Dendritic cell treated with granulocyte-macrophage colony-stimulating factor and Interleukin-4, amounts not matched to agents 40 ng/mL and 50 ng/mL, for 4 days (primary cell): ENCODE measurements at regions of chr18 and their contacts with region 1.

Region 1: DNA sequence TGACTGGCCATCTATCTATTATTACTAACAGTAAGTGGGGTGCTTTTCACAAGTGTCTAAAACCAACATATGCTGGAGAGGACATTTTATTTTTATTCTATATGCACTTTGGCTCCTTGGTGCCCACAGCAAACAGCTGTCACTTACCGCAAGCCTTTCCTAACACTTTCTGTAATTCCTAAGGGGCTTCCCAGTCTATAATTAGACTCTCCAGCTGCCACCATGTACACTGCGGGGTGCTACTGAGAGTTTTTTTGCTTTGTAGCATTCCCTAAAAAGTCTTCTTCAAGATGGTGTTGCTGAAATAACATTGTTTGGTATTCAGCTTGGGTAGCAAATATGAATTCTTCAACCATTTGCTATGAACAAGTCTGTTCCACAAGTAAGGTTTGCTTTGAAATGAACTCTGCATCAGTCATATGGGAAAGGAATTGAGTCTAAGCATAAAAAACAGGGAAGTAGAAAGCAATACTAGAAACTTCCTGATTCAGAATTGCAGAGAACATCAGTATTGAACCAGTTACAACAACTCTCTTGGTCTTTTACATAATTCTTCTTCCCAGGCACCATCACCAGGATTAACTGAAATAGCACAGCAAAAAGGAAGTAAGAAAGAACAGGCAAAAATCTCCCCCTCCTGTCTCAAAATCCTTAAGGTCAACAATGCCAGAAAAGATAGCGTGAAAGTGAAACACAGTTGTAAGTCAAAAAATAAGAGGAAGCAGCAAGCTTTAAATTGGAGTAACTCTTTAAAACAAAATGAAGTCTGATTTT is 28.6 kb downstream of the EPB41L3 start:
- H3K4me3 Mint-ChIP-seq: peak overlapping the region; percentile 48
- H3K27ac Mint-ChIP-seq: peak overlapping the region; percentile 82
- H3K4me1 Mint-ChIP-seq: peaks cover 63% of the 10 kb centered on the region
- H3K27me3 Mint-ChIP-seq: no peaks in the 10 kb centered on the region

Region 2: DNA sequence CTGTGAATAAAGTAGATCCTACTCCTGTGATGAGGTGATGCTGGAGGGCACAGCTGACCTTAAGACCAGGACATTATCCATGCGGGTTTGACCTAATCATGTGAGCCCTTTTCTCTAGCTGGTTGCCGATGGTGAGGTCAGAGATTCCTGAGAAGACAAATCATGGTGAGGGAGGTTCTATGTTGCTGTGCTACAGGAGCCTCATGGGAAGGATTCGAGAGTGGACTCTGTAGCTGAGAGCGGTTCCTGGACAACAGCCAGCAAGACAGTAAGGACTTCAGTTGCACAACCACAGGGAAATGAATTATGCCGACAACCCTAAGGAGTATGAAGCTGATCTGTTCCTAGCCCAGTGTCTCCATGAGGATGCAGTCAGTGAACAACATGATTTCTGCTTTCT is 51.8 kb before region 1 on chr18:
- intact Hi-C with region 1: loop called (anchors 5 kb)
- H3K4me3 Mint-ChIP-seq: peak overlapping the region; percentile 21
- H3K27ac Mint-ChIP-seq: peak overlapping the region; percentile 81
- H3K4me1 Mint-ChIP-seq: peaks cover 71% of the 10 kb centered on the region
- H3K27me3 Mint-ChIP-seq: no peaks in the 10 kb centered on the region

Region 3: DNA sequence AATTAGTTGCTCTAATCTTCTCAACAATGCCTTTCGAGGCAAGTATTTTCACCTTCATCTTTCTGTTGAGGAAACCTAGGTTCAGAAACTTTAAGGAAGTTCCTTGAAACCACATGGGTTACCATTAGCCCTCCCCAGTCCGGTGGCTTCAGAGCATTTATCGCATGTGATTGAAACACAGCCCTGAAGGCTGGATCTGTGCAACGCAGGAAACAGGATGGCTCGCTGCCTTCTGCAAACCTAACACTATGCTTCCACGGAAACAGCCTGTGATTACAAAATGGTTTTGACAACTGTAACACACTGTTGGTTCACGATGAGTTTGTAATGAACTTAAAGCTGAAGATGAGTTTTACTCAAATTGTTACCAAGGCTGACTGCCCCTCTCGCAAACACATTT is 39.9 kb before region 1 on chr18:
- intact Hi-C with region 1: loop called (anchors 5 kb)
- H3K4me3 Mint-ChIP-seq: no peak overlapping the region
- H3K27ac Mint-ChIP-seq: peak overlapping the region; percentile 35
- H3K4me1 Mint-ChIP-seq: peaks cover 36% of the 10 kb centered on the region
- H3K27me3 Mint-ChIP-seq: no peaks in the 10 kb centered on the region